ENCODE measurements at regions of chr10 and their contacts with region 1.

Region 1: DNA sequence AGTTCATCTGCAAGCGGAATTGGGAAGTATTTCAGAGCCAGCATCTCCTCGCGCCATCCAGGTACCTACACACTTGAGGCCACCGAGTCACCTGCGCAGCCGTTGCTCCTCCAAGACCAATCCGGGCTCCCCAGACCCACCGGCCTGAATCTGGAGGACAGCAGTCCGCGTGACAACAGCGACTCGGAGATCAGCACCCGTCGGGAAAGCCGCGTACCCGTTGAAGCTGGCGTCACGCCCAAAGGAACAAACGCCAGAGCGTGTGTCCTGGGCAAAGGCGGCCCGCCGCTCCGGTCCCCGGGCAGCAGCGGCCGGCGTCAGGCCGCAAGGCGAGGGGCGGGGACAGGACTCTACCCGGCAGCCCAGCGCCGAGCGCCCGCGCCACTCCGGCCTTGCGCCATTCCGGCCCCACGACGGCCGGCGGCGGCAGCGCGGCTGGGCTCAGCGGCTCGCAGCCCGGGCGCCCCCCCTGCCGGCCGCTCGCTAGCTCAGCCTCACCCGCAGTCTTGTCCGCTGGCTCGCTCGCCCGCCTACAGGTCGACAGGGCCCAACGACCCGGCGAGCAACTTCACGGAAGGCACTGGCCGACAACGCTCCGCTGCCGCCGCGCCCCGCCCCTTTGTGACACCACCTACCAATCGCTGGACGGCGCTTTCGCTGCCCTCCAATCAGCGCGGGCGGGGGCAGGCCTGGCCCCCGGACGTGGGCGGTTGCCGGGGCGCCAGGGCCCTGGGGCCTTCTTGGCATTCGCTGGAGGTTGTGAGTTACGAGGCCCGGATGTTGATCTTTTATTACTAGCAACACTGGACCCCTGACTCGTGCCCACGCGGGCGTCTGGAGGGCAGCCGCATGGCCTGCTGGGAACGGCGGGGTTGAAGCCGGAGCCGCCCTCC is at the start of gene ZFAND4:
- DNase-seq: peak; percentile 100
- ATAC-seq: peak; percentile 99
- total RNA-seq, gene ZFAND4: 11.4 TPM

Region 2: DNA sequence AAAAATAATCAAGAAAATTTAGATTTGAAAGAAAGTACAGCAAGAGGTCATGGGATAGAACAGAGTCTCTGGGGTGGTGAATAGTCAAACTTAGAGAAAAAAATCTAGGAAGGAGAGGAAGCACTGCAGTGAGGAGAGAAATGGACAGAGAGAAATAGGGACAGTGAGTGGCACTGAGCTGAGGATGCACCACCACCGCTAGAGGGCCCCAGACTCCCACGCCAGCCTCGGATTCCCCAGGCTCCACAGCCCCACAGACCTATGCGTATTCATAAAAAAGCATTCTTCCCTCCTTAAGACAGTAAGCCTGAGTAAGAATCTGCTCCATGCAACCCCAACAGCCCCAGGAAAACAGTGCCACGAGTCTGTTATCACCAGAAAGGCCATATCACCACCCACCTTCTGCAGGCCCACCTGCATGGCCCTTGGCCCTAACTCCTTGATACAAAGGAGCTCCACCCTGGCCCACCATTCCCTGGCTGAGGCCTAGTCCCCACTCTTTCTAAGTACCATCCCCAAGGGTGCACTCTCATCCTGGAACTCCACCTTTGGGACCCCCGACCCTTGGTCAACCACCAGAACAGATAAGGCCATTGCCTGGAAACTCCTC is 207.4 kb before region 1 on chr10:
- intact Hi-C with region 1: loop called (anchors 5 kb)
- DNase-seq: peak; percentile 88
- ATAC-seq: peak; percentile 90

Region 3: GRCh38 chr10:45594276-45595106 is 77.9 kb before region 1 on chr10:
- intact Hi-C with region 1: loop called (anchors 5 kb)
- DNase-seq: peak; percentile 97
- ATAC-seq: peak; percentile 99

Region 4: DNA sequence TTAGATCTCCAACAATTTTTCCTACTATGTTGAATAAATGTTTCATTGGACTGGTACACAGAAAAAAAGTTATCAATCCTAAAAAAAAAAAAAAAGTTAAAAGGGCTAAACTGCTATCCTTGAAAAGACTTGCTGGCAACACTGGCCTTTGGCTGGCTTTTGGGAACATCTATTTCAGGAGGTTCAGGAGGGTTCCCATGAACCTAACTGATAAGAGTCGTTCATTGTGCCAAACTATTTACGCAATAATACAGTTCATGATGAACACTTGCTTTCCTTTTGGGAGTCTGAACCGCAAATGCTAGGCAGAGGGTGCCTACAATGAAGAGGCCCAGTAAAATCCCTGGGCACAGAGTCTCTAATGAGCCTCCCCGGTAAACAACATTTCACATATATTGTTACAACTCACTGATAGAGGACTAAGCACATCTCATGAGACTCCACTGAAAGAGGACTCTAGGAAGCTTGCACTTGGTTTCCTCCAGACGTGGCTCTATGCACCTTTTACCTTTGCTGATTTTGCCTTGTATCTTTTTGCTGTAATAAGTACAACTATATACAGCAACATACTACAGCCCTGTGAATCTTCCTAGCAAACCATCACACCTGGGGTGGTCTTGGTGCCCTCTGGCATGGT is 44.9 kb before region 1 on chr10:
- intact Hi-C with region 1: loop called (anchors 5 kb)
- DNase-seq: no peak
- ATAC-seq: peak; percentile 89

Measured in Right ventricle myocardium inferior (tissue), 1 donor.